ENCODE measurements at regions of chr21 and their contacts with region 1.

Region 1: GRCh38 chr21:29372063-29372802 is 73.5 kb downstream of the BACH1 start:
- DNase-seq: peak; percentile 86
- H3K4me3 Mint-ChIP-seq: no peak overlapping the region
- H3K27ac Mint-ChIP-seq: no peak overlapping the region
- H3K4me1 Mint-ChIP-seq: peaks cover 3% of the 10 kb centered on the region
- H3K27me3 Mint-ChIP-seq: no peaks in the 10 kb centered on the region
- CTCF ChIP-seq: peak; percentile 69

Region 2: DNA sequence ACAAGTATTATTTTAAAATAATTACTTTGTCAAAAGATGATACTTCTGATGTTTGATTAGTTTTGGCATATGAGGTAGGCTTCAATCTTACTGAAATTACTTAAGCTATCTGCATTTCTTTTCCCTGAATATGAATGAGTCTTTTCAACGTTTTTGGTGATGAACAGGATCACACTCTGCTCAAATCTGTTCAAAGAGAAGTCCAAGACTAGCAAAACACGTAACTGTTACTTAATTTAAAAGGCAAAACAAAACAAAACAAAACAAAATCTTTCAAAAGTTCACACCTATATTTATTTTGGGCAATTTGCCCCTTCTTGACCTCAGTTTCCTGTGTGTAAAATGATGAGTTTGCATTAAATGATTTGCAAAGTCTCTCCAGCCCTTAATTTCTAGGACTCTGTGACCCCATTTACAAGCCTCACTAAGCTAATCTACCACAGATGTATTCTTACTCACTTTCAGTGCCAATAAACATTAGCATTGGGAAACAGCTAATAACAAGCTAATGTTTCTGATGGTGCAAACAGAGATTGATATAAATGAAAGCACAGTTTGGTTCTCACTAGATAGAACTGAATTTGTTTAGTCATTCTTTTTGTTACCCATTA is 1245.0 kb before region 1 on chr21:
- CTCF ChIA-PET with region 1: no interaction called
- POLR2A ChIA-PET with region 1: no interaction called
- intact Hi-C with region 1: no loop called
- DNase-seq: no peak
- H3K4me3 Mint-ChIP-seq: no peak overlapping the region
- H3K27ac Mint-ChIP-seq: no peak overlapping the region
- H3K4me1 Mint-ChIP-seq: no peaks in the 10 kb centered on the region
- H3K27me3 Mint-ChIP-seq: no peaks in the 10 kb centered on the region
- CTCF ChIP-seq: no peak

Region 3: DNA sequence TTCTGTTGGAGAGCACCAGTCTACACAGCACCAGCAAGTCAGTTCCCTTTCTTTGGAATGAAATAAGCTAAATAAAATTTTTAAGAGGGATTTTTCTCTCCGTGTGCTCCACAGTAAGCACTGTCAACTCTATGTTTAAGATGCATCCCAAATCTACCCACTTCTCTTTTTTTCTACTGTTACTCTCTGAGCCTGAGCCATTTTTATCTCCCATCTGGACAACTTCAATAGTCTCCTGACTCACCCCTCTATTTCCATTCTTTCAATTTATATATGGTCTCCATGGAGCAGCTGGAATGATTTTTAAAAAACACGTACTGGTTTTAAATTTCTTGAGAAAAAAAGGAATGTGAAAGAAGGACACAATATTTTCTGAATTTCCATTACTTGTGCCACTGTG is 274.1 kb before region 1 on chr21:
- CTCF ChIA-PET with region 1: interaction called, 106 read pairs
- POLR2A ChIA-PET with region 1: interaction called, 4 read pairs
- intact Hi-C with region 1: no loop called
- DNase-seq: no peak
- H3K4me3 Mint-ChIP-seq: no peak overlapping the region
- H3K27ac Mint-ChIP-seq: no peak overlapping the region
- H3K4me1 Mint-ChIP-seq: peaks cover 6% of the 10 kb centered on the region
- H3K27me3 Mint-ChIP-seq: no peaks in the 10 kb centered on the region
- CTCF ChIP-seq: no peak

Region 4: DNA sequence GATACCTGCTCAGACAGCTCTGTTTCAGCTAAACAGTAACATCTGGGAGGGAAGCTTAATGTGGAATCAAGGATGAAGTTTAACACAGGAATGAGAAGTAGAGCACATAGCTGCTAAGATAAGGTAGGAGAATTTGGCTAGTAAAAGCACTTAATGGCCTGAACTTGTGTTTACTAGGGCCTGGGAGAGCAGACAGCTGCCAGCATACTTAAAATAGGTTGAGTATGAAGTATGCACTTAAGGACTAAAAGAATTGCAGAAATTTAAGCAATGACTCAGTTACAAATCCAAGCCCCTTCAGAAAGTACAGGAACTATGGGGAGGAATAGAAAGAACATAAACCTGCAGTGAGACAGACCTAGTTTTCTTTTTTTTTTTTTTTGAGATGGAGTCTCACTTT is 20.5 kb before region 1 on chr21:
- CTCF ChIA-PET with region 1: interaction called, 35 read pairs
- POLR2A ChIA-PET with region 1: interaction called, 3 read pairs
- intact Hi-C with region 1: no loop called
- DNase-seq: no peak
- H3K4me3 Mint-ChIP-seq: no peak overlapping the region
- H3K27ac Mint-ChIP-seq: peak overlapping the region; percentile 21
- H3K4me1 Mint-ChIP-seq: peaks cover 13% of the 10 kb centered on the region
- H3K27me3 Mint-ChIP-seq: no peaks in the 10 kb centered on the region
- CTCF ChIP-seq: no peak

Region 5: DNA sequence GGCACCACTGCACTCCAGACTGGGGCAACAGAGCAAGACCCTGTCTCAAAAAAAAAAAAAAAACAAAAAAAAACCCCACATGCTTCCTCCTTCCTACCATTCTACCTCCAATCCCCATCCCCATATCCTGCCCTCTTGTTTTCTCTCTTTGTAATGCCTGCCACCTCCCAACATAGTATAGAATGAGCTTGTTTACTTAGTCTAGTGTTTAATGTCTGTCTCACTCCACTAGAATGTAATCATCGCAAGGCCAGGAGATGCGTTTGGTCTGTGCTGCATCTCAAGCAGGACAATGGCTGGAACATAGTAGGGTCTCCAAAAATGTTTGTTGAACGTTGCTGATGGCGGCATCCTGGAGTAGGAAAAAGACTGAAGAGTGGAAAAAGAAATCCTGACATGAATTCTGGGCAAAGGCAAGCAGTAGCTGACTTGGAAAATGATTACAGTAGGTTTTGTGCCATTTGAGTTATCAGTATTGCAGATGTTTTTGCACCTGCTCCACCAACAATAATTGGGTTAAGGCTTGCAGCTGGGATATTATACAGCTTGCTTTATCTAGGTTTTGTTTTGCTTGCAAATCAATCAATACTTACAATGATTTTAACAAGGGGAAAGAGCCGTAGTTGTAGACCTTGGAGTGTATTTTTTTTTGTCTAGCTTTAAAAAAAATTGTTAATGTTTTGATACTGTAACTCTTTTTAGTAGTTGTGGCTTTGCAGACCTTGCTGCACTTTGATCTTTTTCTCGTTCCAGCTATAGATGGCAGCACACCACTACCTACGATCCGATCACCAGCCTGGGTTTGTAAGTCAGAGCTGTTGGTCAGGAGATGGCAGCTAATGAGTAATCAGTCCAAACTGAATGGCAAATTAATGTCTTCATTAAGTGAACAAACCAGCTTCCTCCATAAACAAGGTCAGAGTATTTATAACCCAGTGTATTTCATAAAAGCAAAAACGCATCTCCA is 11.2 kb before region 1 on chr21:
- CTCF ChIA-PET with region 1: interaction called, 34 read pairs
- POLR2A ChIA-PET with region 1: no interaction called
- intact Hi-C with region 1: no loop called
- DNase-seq: no peak
- H3K4me3 Mint-ChIP-seq: no peak overlapping the region
- H3K27ac Mint-ChIP-seq: no peak overlapping the region
- H3K4me1 Mint-ChIP-seq: peaks cover 6% of the 10 kb centered on the region
- H3K27me3 Mint-ChIP-seq: no peaks in the 10 kb centered on the region
- CTCF ChIP-seq: no peak

Region 6: GRCh38 chr21:29849735-29850176 is 477.5 kb after region 1 on chr21:
- CTCF ChIA-PET with region 1: interaction called, 4 read pairs
- POLR2A ChIA-PET with region 1: no interaction called
- intact Hi-C with region 1: loop called (anchors 5 kb)
- DNase-seq: peak; percentile 69
- H3K4me3 Mint-ChIP-seq: no peak overlapping the region
- H3K27ac Mint-ChIP-seq: no peak overlapping the region
- H3K4me1 Mint-ChIP-seq: no peaks in the 10 kb centered on the region
- H3K27me3 Mint-ChIP-seq: no peaks in the 10 kb centered on the region
- CTCF ChIP-seq: peak; percentile 77

Measured in MCF 10A (cell line).